PC-9 (cell line): ENCODE measurements at regions of chr10 and their contacts with region 1.

Region 1: DNA sequence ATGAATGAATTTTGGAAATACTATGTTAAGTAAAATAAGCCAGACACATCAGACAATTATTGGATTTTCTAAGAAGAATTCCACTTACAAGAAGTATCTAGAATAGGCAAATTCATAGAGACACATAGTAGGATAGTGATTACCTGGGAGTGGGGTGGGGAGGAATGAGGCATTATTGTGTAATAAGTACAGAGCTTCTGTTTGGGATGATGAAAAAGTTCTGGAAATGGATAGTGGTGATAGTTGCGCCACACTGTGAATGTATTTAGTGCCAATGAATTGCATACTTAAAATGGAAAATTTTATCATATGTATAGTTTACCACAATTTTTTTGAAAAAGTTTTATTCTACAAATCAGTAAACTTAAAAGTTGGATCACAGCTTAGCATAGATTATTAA is 297.2 kb upstream of the KAT6B start:
- DNase-seq: no peak
- H3K4me3 ChIP-seq: no peak overlapping the region
- H3K27ac ChIP-seq: no peak overlapping the region
- H3K4me1 ChIP-seq: no peaks in the 10 kb centered on the region
- H3K27me3 ChIP-seq: no peaks in the 10 kb centered on the region
- CTCF ChIP-seq: no peak

Region 2: DNA sequence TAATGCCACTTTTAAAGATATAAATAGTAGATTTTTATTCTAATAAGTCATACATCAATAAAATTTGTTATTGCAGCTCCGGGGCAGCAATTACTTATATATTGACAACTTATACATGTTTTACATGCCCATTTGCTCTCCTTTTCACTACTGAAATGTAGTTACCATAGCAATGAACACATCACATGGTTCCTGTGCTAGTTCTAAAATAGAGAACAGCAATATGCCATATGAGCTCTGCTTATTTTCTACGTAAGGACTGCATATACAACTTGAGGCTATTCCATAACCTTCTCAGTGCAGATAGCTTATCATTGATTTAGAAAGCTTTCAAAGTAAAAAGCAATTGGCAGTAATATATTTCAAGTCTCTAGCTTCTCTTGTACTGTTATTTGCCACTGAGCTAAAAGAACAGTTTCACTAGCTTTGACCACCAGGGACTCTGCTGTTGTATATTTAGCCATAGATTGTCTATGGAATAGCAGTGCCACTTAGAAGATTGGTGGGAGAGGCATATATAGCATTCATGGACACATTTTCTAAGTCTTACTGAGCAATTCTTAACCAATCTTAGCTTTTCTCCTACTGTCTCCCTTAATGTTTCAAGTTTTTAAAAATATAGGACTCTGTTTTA is 27.0 kb after region 1 on chr10:
- CTCF ChIA-PET with region 1: no interaction called
- POLR2A ChIA-PET with region 1: no interaction called
- intact Hi-C with region 1: loop called (anchors 1 kb)
- DNase-seq: no peak
- H3K4me3 ChIP-seq: no peak overlapping the region
- H3K27ac ChIP-seq: no peak overlapping the region
- H3K4me1 ChIP-seq: no peaks in the 10 kb centered on the region
- H3K27me3 ChIP-seq: no peaks in the 10 kb centered on the region
- CTCF ChIP-seq: no peak